A673 (cell line): ENCODE measurements at regions of chr9 and their contacts with region 1.

Region 1: GRCh38 chr9:77640741-77641580 is 7.2 kb downstream of the GNA14 start:
- DNase-seq: peak; percentile 96
- H3K4me3 ChIP-seq: no peak overlapping the region
- H3K27ac ChIP-seq: peak overlapping the region; percentile 99
- H3K4me1 ChIP-seq: peaks cover 63% of the 10 kb centered on the region
- H3K27me3 ChIP-seq: no peaks in the 10 kb centered on the region
- CTCF ChIP-seq: no peak

Region 2: DNA sequence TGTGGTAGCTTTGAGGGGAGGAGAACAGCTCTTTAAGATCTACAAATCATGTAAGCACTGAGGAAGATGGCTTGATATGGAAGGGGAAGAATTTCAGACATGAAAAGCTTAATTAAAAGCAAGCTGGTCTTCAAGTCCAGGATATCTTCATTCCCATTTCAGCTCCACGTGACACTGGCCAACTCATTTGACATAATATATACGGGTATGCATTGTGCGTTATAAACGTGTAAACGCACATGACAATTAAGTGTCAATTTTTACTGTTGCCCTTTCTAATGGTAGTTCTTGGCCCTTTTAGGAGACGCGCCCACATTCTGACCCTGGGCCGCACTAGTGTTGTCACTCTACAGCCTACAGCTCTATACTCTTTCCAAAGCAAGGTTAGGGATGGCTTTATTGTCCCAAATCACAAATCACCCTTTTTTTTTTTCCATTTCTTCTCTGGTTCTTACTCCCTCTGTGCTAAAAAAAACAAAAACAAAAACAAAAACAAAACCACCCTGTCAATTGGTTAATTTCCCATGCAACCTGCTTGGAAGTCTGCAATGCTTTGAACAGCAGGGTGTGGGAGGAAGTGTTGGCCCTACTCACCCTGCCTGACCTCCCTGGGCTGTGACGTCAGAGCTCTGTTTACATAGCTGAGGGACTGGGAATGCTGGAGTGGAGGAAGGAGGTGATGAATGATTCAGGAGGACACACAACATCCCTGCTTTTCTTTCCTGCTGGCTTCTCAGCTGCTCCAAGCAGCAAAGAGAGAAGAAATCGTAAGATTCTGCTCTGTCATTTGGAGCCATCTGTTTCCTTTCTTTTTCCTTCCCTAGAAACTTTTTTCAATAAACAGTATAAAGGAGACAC is 1266.0 kb before region 1 on chr9:
- CTCF ChIA-PET with region 1: no interaction called
- POLR2A ChIA-PET with region 1: no interaction called
- intact Hi-C with region 1: no loop called
- DNase-seq: no peak
- H3K4me3 ChIP-seq: no peak overlapping the region
- H3K27ac ChIP-seq: no peak overlapping the region
- H3K4me1 ChIP-seq: no peaks in the 10 kb centered on the region
- H3K27me3 ChIP-seq: no peaks in the 10 kb centered on the region
- CTCF ChIP-seq: no peak

Region 3: DNA sequence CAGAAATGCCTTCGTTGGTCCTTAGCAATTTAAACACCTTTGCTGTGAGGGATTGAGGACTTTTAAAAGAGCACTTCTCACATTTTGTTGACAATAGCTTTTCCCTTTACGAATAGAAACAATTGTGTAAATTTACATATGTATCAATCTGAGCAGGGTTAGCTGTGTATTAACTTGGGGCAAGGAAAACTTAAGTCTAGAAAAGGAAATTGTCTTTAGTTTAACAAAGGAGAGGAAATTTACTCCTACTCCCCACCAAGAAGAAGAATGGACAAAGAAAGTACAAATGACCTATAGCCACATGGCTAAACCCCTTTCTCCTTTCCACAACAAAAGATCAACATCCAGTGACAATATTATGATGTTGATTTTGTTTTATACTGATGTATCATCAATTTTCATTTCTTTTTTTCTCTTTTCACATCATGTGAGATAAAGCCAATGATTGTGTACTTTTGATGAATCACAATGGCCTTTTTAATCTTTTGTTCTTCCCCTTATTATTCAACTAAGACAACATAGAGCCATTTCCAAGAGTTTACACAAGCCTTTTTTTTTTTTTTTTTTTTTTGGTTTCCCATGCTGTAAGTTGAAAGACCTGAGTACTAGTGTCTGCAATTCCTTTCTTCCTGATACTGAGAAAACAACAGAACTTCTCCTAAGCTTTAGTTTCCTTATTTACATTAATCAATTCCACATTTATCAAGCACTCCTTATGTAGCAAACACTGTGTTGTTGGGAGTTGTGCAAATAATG is 602.5 kb before region 1 on chr9:
- CTCF ChIA-PET with region 1: no interaction called
- POLR2A ChIA-PET with region 1: no interaction called
- intact Hi-C with region 1: no loop called
- DNase-seq: no peak
- H3K4me3 ChIP-seq: no peak overlapping the region
- H3K27ac ChIP-seq: no peak overlapping the region
- H3K4me1 ChIP-seq: no peaks in the 10 kb centered on the region
- H3K27me3 ChIP-seq: peaks cover 31% of the 10 kb centered on the region
- CTCF ChIP-seq: no peak

Region 4: GRCh38 chr9:77440057-77440456 is 200.9 kb before region 1 on chr9:
- CTCF ChIA-PET with region 1: no interaction called
- POLR2A ChIA-PET with region 1: no interaction called
- intact Hi-C with region 1: loop called (anchors 1 kb)
- DNase-seq: peak; percentile 99
- H3K4me3 ChIP-seq: peak overlapping the region; percentile 10
- H3K27ac ChIP-seq: peak overlapping the region; percentile 95
- H3K4me1 ChIP-seq: peaks cover 55% of the 10 kb centered on the region
- H3K27me3 ChIP-seq: no peaks in the 10 kb centered on the region
- CTCF ChIP-seq: no peak

Region 5: DNA sequence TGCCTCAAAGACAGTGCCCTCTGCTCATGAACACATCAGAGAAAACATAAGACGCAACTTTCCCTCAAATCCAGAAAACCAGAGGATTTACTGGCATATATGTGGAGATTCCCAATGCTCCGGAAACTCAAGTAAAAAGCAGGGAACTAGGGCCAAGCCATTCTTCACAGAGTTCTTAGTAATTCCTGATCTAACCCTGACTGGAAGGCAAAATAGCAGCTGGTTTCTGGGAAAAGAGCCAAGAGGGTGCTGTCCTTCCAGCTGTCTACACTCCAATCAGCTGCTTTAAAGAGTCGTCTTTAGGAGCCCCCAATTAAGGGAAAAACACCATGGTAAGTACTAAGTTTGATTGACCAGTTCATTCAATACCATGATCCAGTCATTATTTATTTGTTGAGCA is 42.4 kb before region 1 on chr9:
- CTCF ChIA-PET with region 1: no interaction called
- POLR2A ChIA-PET with region 1: no interaction called
- intact Hi-C with region 1: loop called (anchors 5 kb)
- DNase-seq: peak; percentile 77
- H3K4me3 ChIP-seq: no peak overlapping the region
- H3K27ac ChIP-seq: peak overlapping the region; percentile 49
- H3K4me1 ChIP-seq: peaks cover 61% of the 10 kb centered on the region
- H3K27me3 ChIP-seq: no peaks in the 10 kb centered on the region
- CTCF ChIP-seq: no peak

Region 6: DNA sequence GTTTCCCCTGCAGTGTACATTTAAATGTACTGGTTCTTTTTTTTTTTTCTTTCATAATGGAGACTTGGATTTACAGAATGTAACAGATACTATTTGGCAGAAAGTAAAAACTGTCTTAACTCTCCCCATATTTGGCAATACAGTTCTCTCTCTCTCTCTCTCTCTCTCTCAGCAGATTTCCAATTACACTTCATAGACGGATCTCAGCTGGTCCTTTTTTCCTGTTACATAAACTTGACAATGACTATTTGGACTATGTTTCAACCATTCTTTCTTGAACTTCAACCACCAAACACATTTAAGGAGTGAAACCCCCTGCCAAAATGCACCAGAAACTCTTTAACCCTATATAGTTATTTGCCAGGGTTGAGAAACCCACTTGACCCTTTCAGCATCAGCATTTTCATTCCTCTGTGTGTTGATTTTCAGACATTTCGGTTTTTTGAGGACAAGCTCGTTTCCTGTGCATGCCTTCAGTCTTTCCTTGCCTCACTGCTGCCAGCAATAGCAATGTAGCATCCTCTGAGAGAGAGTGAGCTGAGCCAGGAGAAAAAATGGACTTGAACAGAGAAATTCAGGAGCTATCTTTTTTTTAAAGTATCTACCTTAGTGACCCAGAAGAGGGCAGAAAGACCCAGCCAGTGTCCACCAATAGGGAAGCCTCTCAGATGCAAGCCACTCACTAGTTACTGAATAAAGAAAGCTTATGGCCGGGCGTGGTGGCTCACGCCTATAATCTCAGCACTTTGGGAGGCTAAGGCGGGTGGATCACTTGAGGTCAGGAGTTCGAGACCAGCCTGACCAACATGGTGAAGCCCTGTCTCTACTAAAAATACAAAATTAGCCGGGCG is 33.2 kb after region 1 on chr9:
- CTCF ChIA-PET with region 1: no interaction called
- POLR2A ChIA-PET with region 1: no interaction called
- intact Hi-C with region 1: loop called (anchors 1 kb)
- DNase-seq: no peak
- H3K4me3 ChIP-seq: no peak overlapping the region
- H3K27ac ChIP-seq: no peak overlapping the region
- H3K4me1 ChIP-seq: no peaks in the 10 kb centered on the region
- H3K27me3 ChIP-seq: no peaks in the 10 kb centered on the region
- CTCF ChIP-seq: no peak